ENCODE measurements at regions of chr3 and their contacts with region 1.

Region 1: DNA sequence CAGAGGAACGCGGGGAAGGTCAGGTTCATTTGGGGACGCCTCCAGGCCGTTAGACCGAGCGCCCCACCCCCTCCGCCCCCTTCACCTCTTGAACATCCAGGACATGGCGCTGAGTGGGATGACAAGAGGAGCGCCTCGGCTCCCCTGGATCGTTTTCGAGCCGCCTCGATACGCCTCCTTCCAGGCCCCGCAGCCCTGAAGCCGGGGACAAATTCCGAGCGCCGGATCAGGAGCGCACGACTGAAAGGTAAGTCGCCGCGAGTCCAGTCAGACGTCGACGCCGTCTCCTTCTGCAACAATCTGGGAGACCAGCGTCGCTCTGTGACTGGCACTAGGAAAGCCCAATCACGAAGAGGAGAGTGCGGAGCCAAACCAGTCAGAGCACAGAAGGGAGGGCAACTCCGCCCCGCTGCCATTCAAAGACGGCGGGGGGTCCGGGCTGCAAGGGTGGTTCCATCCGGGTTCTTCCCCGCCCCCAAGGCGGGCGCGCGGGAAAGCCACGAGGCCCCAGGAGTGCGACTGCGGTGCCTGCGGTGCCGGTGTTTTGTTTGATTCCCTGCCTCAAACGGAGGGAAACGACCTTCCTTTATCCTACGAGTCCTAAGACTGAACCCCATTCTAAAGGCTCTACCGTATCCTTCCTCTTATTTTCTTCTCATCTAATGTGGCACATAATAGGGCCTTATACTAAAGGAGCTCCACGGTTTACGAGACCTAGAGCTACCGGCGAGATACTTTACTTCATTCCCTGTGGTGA is at the start of gene HLTF:
- DNase-seq: peak; percentile 86 to 97
- H3K4me3 ChIP-seq: peak within 1 kb of the TSS; percentile 74 to 84
- H3K27ac ChIP-seq: peak within 1 kb of the TSS; percentile 3 to 74
- H3K4me1 ChIP-seq: peaks cover 4 to 6% of the 10 kb centered on the region in 2 donors
- H3K27me3 ChIP-seq: no peaks in the 10 kb centered on the region
- CTCF ChIP-seq: no peak
- total RNA-seq, gene HLTF: 136 TPM

Region 2: GRCh38 chr3:148873270-148873926 is 213.0 kb before region 1 on chr3:
- intact Hi-C with region 1: no loop called
- DNase-seq: no peak
- H3K4me3 ChIP-seq: no peak overlapping the region
- H3K27ac ChIP-seq: no peak overlapping the region
- H3K4me1 ChIP-seq: no peaks in the 10 kb centered on the region
- H3K27me3 ChIP-seq: no peaks in the 10 kb centered on the region
- CTCF ChIP-seq: no peak

Region 3: GRCh38 chr3:148971401-148972163 is 114.8 kb before region 1 on chr3:
- intact Hi-C with region 1: loop called (anchors 5 kb)
- DNase-seq: no peak
- H3K4me3 ChIP-seq: no peak overlapping the region
- H3K27ac ChIP-seq: peak overlapping the region; percentile 51 to 82
- H3K4me1 ChIP-seq: peaks cover 0 to 35% of the 10 kb centered on the region in 2 donors
- H3K27me3 ChIP-seq: no peaks in the 10 kb centered on the region
- CTCF ChIP-seq: no peak

Region 4: GRCh38 chr3:149129326-149130205 is 43.2 kb after region 1 on chr3 and contains the start of gene HPS3:
- intact Hi-C with region 1: loop called (anchors 1 kb)
- DNase-seq: peak; percentile 76 to 96
- H3K4me3 ChIP-seq: peak within 1 kb of the TSS; percentile 73 to 94
- H3K27ac ChIP-seq: peak within 1 kb of the TSS; percentile 87 to 89
- H3K4me1 ChIP-seq: peaks cover 0 to 12% of the 10 kb centered on the region in 2 donors
- H3K27me3 ChIP-seq: no peaks in the 10 kb centered on the region
- CTCF ChIP-seq: peak in 1 of 3 experiments; percentile 22
- total RNA-seq, gene HPS3: 18.9 TPM